ENCODE measurements at regions of chr2 and their contacts with region 1.

Region 1: GRCh38 chr2:22867973-22868372 is 517.0 kb upstream of the KLHL29 start:
- DNase-seq: no peak
- H3K4me3 ChIP-seq: no peak overlapping the region
- H3K27ac ChIP-seq: no peak overlapping the region
- H3K4me1 ChIP-seq: no peaks in the 10 kb centered on the region
- H3K27me3 ChIP-seq: no peaks in the 10 kb centered on the region
- CTCF ChIP-seq: no peak
- EP300 ChIP-seq: no peak
- POLR2A ChIP-seq: no peak
- RAD21 ChIP-seq: no peak

Region 2: DNA sequence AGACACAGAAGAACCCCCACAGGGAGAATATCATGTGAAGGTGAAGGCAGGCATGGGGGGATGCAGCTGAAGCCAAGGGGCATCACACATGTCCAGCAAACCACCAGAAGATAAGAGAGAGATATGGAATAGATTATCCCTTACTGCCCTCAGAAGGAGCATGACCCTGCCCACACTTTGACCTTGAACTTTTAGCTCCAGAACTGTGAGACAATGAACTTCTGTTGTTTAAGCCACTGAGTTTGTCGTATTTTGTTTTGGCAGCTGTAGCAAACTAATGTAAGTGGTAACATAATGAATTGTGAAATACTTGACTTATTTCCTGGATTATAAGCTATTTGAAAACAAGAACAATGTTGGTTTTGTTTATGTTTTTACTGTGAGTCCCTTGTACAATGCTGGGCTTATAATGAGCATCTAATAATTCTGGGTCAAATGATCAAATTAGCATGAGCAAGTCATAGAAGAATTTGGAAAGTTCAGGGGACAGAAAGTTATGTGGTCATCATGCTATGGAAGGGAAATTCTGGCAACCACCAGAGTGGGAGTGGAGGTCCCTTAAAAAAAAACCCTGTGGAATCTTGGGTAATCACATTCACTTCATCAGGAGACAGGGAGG is 23.9 kb before region 1 on chr2:
- CTCF ChIA-PET with region 1: no interaction called
- POLR2A ChIA-PET with region 1: no interaction called
- DNase-seq: no peak
- H3K4me3 ChIP-seq: no peak overlapping the region
- H3K27ac ChIP-seq: no peak overlapping the region
- H3K4me1 ChIP-seq: no peaks in the 10 kb centered on the region
- H3K27me3 ChIP-seq: peaks cover 0 to 1% (median 0%) of the 10 kb centered on the region in 4 experiments; a peak in 1 of 7 replicates
- CTCF ChIP-seq: no peak
- EP300 ChIP-seq: no peak
- POLR2A ChIP-seq: no peak
- RAD21 ChIP-seq: no peak

Region 3: GRCh38 chr2:22904126-22904684 is 36.2 kb after region 1 on chr2:
- CTCF ChIA-PET with region 1: interaction called, 13 read pairs
- POLR2A ChIA-PET with region 1: no interaction called
- DNase-seq: peak; percentile 10 to 84
- H3K4me3 ChIP-seq: no peak overlapping the region
- H3K27ac ChIP-seq: no peak overlapping the region
- H3K4me1 ChIP-seq: no peaks in the 10 kb centered on the region
- H3K27me3 ChIP-seq: no peaks in the 10 kb centered on the region
- CTCF ChIP-seq: peak; percentile 59 to 80 (median 62)
- EP300 ChIP-seq: no peak
- POLR2A ChIP-seq: no peak
- RAD21 ChIP-seq: peak; percentile 61 to 75

Measured in H1 (cell line).